Calu3 (cell line): ENCODE measurements at regions of chr16 and their contacts with region 1.

Region 1: DNA sequence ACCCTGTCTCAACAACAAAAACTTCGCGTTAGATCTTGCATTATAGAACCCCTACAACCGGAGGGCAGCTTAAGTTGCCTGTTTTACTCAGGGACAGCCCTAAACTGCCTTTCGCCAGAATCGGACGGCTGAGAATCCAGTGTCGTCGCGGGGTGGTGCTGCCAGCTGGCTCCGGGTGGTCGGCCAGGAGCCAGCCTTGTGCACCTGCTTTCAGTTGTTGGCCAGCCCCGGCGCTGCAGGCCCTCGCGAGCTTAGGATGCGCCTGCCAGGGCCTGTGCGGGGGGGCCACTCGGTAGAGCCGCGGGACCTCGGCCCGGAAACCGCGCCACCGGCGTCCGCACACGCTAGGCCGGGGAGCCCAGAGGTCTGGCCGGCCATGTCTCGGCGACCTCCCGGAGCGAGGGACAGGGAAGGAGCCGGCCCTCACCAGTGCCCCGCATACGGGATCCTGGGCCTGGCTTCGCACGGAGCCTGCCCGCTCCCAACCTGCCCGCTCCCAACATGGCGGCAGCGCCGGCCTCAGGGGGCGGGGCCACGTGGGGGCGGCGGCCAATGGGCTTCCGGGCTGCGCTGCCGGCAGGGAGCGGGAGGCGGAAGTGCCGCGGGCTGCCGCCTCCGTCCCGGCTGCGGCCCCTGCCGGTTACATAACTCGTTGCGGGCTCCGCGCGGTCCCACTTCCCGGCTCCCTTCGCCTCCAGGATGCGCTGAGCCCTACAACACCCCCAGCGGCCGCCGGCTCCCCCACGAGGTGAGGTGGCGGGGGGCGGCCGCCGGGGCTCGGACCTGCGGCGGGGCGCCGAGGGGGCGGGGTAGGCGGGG is 14.2 kb downstream of the NAA60 start:
- DNase-seq: peak; percentile 98
- H3K4me3 Mint-ChIP-seq: peak overlapping the region; percentile 83
- H3K27ac Mint-ChIP-seq: peak overlapping the region; percentile 86
- H3K4me1 Mint-ChIP-seq: peaks cover 28% of the 10 kb centered on the region
- H3K27me3 Mint-ChIP-seq: no peaks in the 10 kb centered on the region
- CTCF ChIP-seq: peak; percentile 50

Region 2: DNA sequence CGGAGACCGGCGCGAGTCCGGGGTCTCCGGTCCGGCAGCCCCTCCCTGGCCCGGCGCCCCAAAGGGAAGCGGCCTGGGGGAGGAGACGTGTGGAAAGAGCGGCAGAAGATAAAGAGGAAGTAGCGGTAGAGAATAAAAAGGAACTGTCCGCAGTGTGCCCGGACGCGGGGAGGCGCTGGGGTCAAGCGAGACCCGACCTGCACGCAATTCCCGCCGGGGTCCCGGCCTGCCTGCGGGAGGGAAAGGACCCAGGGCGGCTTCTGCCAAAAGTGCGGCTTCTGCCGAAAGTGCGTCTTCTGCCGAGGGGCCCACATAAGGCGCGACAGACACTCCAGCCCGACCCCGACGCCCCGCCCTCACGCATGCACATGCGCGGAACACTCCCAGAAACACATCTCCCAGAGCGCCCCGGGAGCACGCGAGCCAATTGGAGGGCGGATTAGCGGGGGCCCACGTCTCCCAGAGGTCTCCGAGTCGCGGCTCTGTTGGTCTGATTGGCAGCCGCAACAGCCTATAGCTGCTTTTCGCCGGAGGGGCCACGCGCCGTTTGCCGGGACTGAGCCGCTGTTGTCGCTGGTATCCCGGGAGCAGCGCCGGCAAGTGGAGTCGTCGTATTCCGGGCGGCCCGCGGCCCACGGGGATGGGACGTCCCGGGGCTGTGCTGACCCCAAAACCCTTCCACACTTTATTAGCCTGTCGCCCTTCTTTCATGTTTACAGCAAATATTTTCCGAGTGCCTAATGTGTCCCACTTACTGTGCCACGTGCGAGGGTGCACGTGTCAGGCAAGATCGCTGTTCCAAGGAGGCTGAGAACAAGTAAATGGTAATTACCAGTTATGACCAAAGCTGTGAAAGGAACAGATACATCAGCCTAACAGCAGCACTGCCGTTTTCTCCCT is 193.3 kb before region 1 on chr16:
- CTCF ChIA-PET with region 1: no interaction called
- intact Hi-C with region 1: loop called (anchors 5 kb)
- DNase-seq: peak; percentile 99
- H3K4me3 Mint-ChIP-seq: peak overlapping the region; percentile 93
- H3K27ac Mint-ChIP-seq: peak overlapping the region; percentile 96
- H3K4me1 Mint-ChIP-seq: no peaks in the 10 kb centered on the region
- H3K27me3 Mint-ChIP-seq: no peaks in the 10 kb centered on the region
- CTCF ChIP-seq: no peak

Region 3: GRCh38 chr16:3400779-3401688 is 56.6 kb before region 1 on chr16 and contains the starts of genes ZNF174 and ZSCAN32:
- CTCF ChIA-PET with region 1: no interaction called
- intact Hi-C with region 1: loop called (anchors 5 kb)
- DNase-seq: peak; percentile 100
- H3K4me3 Mint-ChIP-seq: peak within 1 kb of the TSS; percentile 95
- H3K27ac Mint-ChIP-seq: peak within 1 kb of the TSS; percentile 91
- H3K4me1 Mint-ChIP-seq: peaks cover 10% of the 10 kb centered on the region
- H3K27me3 Mint-ChIP-seq: no peaks in the 10 kb centered on the region
- CTCF ChIP-seq: no peak
- total RNA-seq, gene ZNF174: 13.8 and 14.3 TPM in 2 replicates
- total RNA-seq, gene ZSCAN32: 23.8 and 26.1 TPM in 2 replicates

Region 4: GRCh38 chr16:3487521-3488378 is 30.1 kb after region 1 on chr16:
- CTCF ChIA-PET with region 1: no interaction called
- intact Hi-C with region 1: no loop called
- DNase-seq: no peak
- H3K4me3 Mint-ChIP-seq: no peak overlapping the region
- H3K27ac Mint-ChIP-seq: no peak overlapping the region
- H3K4me1 Mint-ChIP-seq: no peaks in the 10 kb centered on the region
- H3K27me3 Mint-ChIP-seq: no peaks in the 10 kb centered on the region
- CTCF ChIP-seq: no peak